ENCODE measurements at regions of chr17 and their contacts with region 1.

Region 1: DNA sequence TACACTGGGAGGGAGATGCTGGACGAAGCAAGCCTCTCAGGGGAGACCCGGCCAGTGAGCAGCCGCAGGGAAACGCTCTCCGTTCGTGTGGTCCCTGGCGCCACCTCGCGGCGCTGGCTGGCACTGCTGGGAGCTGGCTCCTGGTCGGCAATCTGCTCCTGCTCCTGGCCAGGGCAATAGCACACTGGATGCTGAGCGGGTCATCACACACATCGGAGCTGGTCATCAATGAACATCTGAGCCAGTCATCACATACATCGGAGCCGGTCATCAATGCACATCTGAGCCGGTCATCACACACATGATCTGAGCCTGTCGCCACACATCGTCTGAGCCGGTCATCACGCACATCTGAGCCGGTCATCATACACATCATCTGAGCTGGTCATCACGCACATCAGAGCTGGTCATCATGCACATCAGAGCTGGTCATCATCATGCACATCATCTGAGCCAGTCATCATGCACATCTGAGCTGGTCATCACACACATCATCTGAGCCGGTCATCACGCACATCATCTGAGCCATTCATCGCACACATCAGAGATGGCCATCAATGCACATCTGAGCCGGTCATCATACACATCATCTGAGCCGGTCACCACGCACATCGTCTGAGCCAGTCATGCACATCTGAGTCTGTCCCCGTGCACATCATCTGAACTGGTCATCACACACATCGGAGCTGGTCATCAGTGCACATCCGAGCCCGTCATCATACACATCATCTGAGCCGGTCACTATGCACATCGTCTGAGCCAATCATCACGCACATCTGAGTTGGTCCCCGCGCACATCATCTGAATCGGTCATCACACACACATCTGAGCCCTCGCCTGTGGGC is 217.3 kb downstream of the RBFOX3 start:
- DNase-seq: peak; percentile 93
- ATAC-seq: peak; percentile 70
- H3K4me3 Mint-ChIP-seq: no peak overlapping the region
- H3K27ac Mint-ChIP-seq: no peak overlapping the region
- H3K4me1 Mint-ChIP-seq: peaks cover 3% of the 10 kb centered on the region; the same call in 1 of the 2 replicates
- H3K27me3 Mint-ChIP-seq: peaks cover 21% of the 10 kb centered on the region
- CTCF ChIP-seq: peak; percentile 97

Region 2: DNA sequence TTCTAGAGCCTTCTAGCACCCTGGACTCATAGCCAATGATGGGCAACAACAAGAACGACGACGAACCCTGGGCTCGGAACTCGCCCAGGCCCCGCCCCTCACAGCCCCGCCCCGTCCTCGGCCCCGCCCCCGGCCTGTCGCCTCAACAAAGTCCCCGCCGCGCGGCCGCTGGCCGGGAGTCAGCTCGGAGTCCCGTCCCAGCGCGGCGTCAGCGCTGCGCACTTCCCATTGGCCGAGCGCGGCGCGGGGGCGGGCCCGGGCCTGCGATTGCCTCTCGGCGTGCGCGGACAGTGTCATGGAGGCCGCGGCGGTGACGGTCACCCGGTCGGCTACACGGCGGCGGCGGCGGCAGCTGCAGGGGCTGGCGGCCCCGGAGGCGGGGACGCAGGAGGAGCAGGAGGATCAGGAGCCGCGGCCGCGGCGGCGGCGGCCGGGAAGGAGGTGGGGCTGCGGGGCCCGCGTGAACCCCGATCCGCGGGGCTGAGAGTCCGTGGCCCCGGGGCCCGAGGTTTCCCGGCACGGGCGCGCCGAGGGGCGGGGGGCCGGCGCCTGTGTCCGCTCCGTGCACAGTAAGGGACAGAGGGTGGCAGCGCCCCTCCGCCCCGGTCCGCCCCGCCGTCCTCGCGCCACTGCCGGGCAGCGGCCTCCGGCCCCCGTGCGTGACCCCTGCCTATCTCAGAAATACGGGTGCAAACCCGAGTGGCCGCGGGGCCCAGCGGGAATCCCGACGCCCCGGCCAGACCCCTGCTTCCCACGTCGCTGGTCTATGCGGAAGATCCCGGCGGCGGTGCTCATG is 318.7 kb before region 1 on chr17 and contains the start of gene ENGASE:
- CTCF ChIA-PET with region 1: interaction called, 11 read pairs
- POLR2A ChIA-PET with region 1: no interaction called
- DNase-seq: peak; percentile 94
- ATAC-seq: peak; percentile 98
- H3K4me3 Mint-ChIP-seq: peak within 1 kb of the TSS; percentile 76
- H3K27ac Mint-ChIP-seq: peak within 1 kb of the TSS; percentile 72
- H3K4me1 Mint-ChIP-seq: peaks cover 7% of the 10 kb centered on the region
- H3K27me3 Mint-ChIP-seq: peaks cover 17% of the 10 kb centered on the region
- CTCF ChIP-seq: no peak
- total RNA-seq, gene ENGASE: 40.0 to 47.5 TPM (median 41.6 TPM) in 3 replicates

Region 3: GRCh38 chr17:79109570-79109969 is 284.0 kb before region 1 on chr17:
- CTCF ChIA-PET with region 1: interaction called, 34 read pairs
- POLR2A ChIA-PET with region 1: no interaction called
- DNase-seq: peak; percentile 60
- ATAC-seq: peak; percentile 78
- H3K4me3 Mint-ChIP-seq: no peak overlapping the region
- H3K27ac Mint-ChIP-seq: no peak overlapping the region
- H3K4me1 Mint-ChIP-seq: no peaks in the 10 kb centered on the region
- H3K27me3 Mint-ChIP-seq: no peaks in the 10 kb centered on the region
- CTCF ChIP-seq: 0 out of 2 replicates have a peak, but pooled peaks have one; percentile 23

Region 4: GRCh38 chr17:79188048-79188447 is 205.5 kb before region 1 on chr17:
- CTCF ChIA-PET with region 1: interaction called, 109 read pairs
- POLR2A ChIA-PET with region 1: interaction called, 3 read pairs
- DNase-seq: peak; percentile 85
- ATAC-seq: peak; percentile 42
- H3K4me3 Mint-ChIP-seq: peak overlapping the region; percentile 12; the same call in 1 of the 2 replicates
- H3K27ac Mint-ChIP-seq: no peak overlapping the region
- H3K4me1 Mint-ChIP-seq: peaks cover 53% of the 10 kb centered on the region
- H3K27me3 Mint-ChIP-seq: peaks cover 16% of the 10 kb centered on the region
- CTCF ChIP-seq: peak; percentile 65

Region 5: GRCh38 chr17:79220713-79221291 is 172.8 kb before region 1 on chr17:
- CTCF ChIA-PET with region 1: interaction called, 12 read pairs
- POLR2A ChIA-PET with region 1: no interaction called
- DNase-seq: peak; percentile 62
- ATAC-seq: peak; percentile 82
- H3K4me3 Mint-ChIP-seq: peak overlapping the region; percentile 75
- H3K27ac Mint-ChIP-seq: no peak overlapping the region
- H3K4me1 Mint-ChIP-seq: peaks cover 37% of the 10 kb centered on the region
- H3K27me3 Mint-ChIP-seq: no peaks in the 10 kb centered on the region
- CTCF ChIP-seq: no peak

Region 6: GRCh38 chr17:79325709-79326430 is 67.7 kb before region 1 on chr17:
- CTCF ChIA-PET with region 1: interaction called, 11 read pairs
- POLR2A ChIA-PET with region 1: no interaction called
- DNase-seq: peak; percentile 67
- ATAC-seq: peak; percentile 65
- H3K4me3 Mint-ChIP-seq: no peak overlapping the region
- H3K27ac Mint-ChIP-seq: no peak overlapping the region
- H3K4me1 Mint-ChIP-seq: no peaks in the 10 kb centered on the region
- H3K27me3 Mint-ChIP-seq: no peaks in the 10 kb centered on the region; the same call in 1 of the 2 replicates
- CTCF ChIP-seq: no peak

Region 7: GRCh38 chr17:79707931-79708891 is 314.6 kb after region 1 on chr17:
- CTCF ChIA-PET with region 1: interaction called, 14 read pairs
- POLR2A ChIA-PET with region 1: no interaction called
- DNase-seq: peak; percentile 79
- ATAC-seq: peak; percentile 65
- H3K4me3 Mint-ChIP-seq: peak overlapping the region; percentile 55
- H3K27ac Mint-ChIP-seq: no peak overlapping the region
- H3K4me1 Mint-ChIP-seq: peaks cover 15% of the 10 kb centered on the region
- H3K27me3 Mint-ChIP-seq: no peaks in the 10 kb centered on the region
- CTCF ChIP-seq: peak; percentile 73